BJ (cell line): ENCODE measurements at regions of chr2 and their contacts with region 1.

Region 1: DNA sequence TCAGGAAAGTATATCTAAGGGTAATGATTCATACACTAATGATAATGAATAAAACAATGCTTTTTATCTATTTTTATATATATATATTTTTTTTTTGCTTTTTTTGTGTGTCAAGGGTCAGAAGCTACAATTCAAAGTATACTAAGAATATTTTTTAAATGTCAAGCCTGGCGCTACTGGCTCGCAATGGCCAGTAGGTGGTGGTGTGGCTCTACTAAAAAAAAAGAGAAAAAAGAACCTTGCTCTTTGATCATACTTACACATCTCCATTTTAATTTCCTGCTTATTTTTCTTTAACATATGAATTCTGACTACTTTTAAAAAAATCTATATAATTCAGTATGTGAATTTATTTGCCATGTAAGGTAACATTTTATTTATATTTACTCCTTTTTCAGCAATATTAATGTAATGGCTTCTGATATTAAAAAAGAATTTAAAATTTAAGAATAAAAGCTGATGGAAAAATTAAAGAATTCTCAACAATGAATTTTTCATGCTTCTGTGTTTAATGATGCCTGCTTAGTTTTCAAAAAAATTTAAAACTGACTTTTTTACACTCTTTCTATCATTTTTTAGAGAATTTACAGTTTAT is 232.9 kb downstream of the GULP1 start:
- DNase-seq: no peak
- H3K4me3 ChIP-seq: no peak overlapping the region
- H3K27me3 ChIP-seq: no peaks in the 10 kb centered on the region
- CTCF ChIP-seq: peak; percentile 64

Region 2: GRCh38 chr2:188256420-188256819 is 268.2 kb before region 1 on chr2:
- CTCF ChIA-PET with region 1: no interaction called
- POLR2A ChIA-PET with region 1: no interaction called
- DNase-seq: no peak
- H3K4me3 ChIP-seq: no peak overlapping the region
- H3K27me3 ChIP-seq: no peaks in the 10 kb centered on the region
- CTCF ChIP-seq: no peak

Region 3: GRCh38 chr2:188976545-188977268 is 452.1 kb after region 1 on chr2:
- CTCF ChIA-PET with region 1: interaction called, 12 read pairs
- POLR2A ChIA-PET with region 1: no interaction called
- DNase-seq: no peak
- H3K4me3 ChIP-seq: peak overlapping the region; percentile 67
- H3K27me3 ChIP-seq: no peaks in the 10 kb centered on the region
- CTCF ChIP-seq: peak; percentile 55

Region 4: DNA sequence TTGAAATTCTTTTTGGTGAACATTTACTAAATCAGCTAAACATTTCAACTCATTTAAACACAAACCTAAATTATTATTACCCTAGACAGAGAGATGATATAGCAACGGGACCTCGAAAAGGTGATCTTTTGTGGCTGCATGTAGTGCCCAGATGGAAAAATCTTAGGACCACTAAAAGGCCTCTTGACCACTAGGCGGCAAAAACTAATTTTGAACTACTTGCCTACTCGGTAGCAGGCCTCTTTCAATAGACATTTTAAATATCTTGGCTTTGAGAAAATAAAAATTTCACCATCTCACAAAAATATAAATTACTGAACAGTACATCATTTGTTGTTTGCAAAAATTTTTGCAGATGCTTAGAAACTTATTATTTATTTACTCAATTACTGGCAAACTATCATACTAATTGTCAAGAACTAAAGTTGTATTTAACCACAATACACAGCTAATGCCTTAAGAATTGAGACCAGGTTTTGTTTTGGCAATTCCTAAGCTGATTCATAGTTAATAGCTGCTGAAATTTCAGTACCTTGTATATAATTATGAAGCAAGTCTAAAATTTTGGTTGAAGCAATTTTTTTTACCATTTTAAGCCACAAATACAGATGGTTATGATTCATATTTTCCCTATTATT is 458.9 kb after region 1 on chr2:
- CTCF ChIA-PET with region 1: interaction called, 51 read pairs
- POLR2A ChIA-PET with region 1: no interaction called
- DNase-seq: peak; percentile 50
- H3K4me3 ChIP-seq: no peak overlapping the region
- H3K27me3 ChIP-seq: no peaks in the 10 kb centered on the region
- CTCF ChIP-seq: peak; percentile 53